Caco-2 (cell line): ENCODE measurements at regions of chr11 and their contacts with region 1.

Region 1: GRCh38 chr11:131246663-131247062 is 123.8 kb upstream of the NTM start:
- DNase-seq: peak; percentile 63 to 65
- H3K4me3 ChIP-seq: no peak overlapping the region
- H3K4me3 Mint-ChIP-seq: no peak overlapping the region
- H3K27ac Mint-ChIP-seq: no peak overlapping the region
- H3K4me1 ChIP-seq: no peaks in the 10 kb centered on the region; the same call in 1 of the 2 replicates
- H3K4me1 Mint-ChIP-seq: no peaks in the 10 kb centered on the region
- H3K27me3 ChIP-seq: 0 out of 2 replicates have a peak, but pooled peaks cover 2% of the 10 kb centered on the region
- H3K27me3 Mint-ChIP-seq: peaks cover 35% of the 10 kb centered on the region
- CTCF ChIP-seq: peak; percentile 75 to 76

Region 2: GRCh38 chr11:131392528-131393255 is 146.0 kb after region 1 on chr11:
- CTCF ChIA-PET with region 1: no interaction called
- POLR2A ChIA-PET with region 1: no interaction called
- intact Hi-C with region 1: loop called (anchors 5 kb)
- DNase-seq: no peak
- H3K4me3 ChIP-seq: no peak overlapping the region
- H3K4me3 Mint-ChIP-seq: no peak overlapping the region
- H3K27ac Mint-ChIP-seq: no peak overlapping the region
- H3K4me1 ChIP-seq: no peaks in the 10 kb centered on the region
- H3K4me1 Mint-ChIP-seq: no peaks in the 10 kb centered on the region
- H3K27me3 ChIP-seq: no peaks in the 10 kb centered on the region
- H3K27me3 Mint-ChIP-seq: peaks cover 12% of the 10 kb centered on the region
- CTCF ChIP-seq: peak in 1 of 2 experiments; percentile 18

Region 3: DNA sequence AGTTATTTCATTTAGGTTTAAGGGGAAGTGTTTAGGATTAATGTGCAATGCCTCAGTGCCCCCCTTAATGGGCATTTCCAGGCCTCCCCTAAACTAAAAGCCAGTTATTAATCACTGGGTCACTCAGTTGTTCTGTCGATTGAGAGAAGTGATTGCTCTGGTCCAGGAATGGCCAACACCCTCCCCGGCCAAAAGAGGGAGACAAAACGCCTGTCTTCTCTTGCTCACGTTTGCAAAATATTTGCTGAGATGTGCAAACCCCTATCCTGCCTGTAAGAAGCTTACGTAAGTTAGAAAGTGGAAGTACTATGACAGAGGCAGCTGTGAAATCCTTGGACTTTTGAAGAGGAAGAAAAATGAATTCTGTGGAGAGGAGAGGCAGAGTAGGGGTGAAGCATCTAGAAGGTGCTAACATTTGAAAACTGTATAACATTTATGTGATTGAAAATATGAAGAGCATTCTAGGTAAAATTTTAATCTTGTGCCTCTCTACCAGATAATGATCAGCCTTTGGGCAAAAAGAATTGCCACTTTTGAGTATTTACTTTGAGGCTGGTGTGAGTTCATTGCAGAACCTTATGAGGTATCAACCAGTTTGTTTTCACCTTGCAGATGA is 161.5 kb after region 1 on chr11:
- CTCF ChIA-PET with region 1: no interaction called
- POLR2A ChIA-PET with region 1: no interaction called
- intact Hi-C with region 1: loop called (anchors 5 kb)
- DNase-seq: peak; percentile 62 to 74
- H3K4me3 ChIP-seq: no peak overlapping the region
- H3K4me3 Mint-ChIP-seq: no peak overlapping the region
- H3K27ac Mint-ChIP-seq: no peak overlapping the region
- H3K4me1 ChIP-seq: no peaks in the 10 kb centered on the region
- H3K4me1 Mint-ChIP-seq: no peaks in the 10 kb centered on the region
- H3K27me3 ChIP-seq: no peaks in the 10 kb centered on the region
- H3K27me3 Mint-ChIP-seq: peaks cover 6% of the 10 kb centered on the region
- CTCF ChIP-seq: peak; percentile 73 to 89

Region 4: GRCh38 chr11:131511794-131512193 is 265.1 kb after region 1 on chr11:
- CTCF ChIA-PET with region 1: no interaction called
- POLR2A ChIA-PET with region 1: no interaction called
- intact Hi-C with region 1: loop called (anchors 1 kb)
- DNase-seq: peak; percentile 65 to 71
- H3K4me3 ChIP-seq: no peak overlapping the region
- H3K4me3 Mint-ChIP-seq: no peak overlapping the region
- H3K27ac Mint-ChIP-seq: no peak overlapping the region
- H3K4me1 ChIP-seq: no peaks in the 10 kb centered on the region; the same call in 1 of the 2 replicates
- H3K4me1 Mint-ChIP-seq: no peaks in the 10 kb centered on the region
- H3K27me3 ChIP-seq: no peaks in the 10 kb centered on the region
- H3K27me3 Mint-ChIP-seq: peaks cover 8% of the 10 kb centered on the region
- CTCF ChIP-seq: peak; percentile 60 to 82